ENCODE measurements at regions of chr11 and their contacts with region 1.

Region 1: GRCh38 chr11:67382276-67383136 is 9.1 kb upstream of the CLCF1 start:
- DNase-seq: peak; percentile 88
- H3K4me3 Mint-ChIP-seq: no peak overlapping the region
- H3K27ac Mint-ChIP-seq: peak overlapping the region; percentile 2
- H3K4me1 Mint-ChIP-seq: peaks cover 59% of the 10 kb centered on the region
- H3K27me3 Mint-ChIP-seq: no peaks in the 10 kb centered on the region
- CTCF ChIP-seq: peak; percentile 94

Region 2: GRCh38 chr11:67265633-67266423 is 116.7 kb before region 1 on chr11:
- CTCF ChIA-PET with region 1: interaction called, 10 read pairs
- intact Hi-C with region 1: loop called (anchors 10 kb)
- DNase-seq: peak; percentile 90
- H3K4me3 Mint-ChIP-seq: peak overlapping the region; percentile 100
- H3K27ac Mint-ChIP-seq: peak overlapping the region; percentile 66
- H3K4me1 Mint-ChIP-seq: peaks cover 46% of the 10 kb centered on the region
- H3K27me3 Mint-ChIP-seq: no peaks in the 10 kb centered on the region
- CTCF ChIP-seq: peak; percentile 71

Region 3: DNA sequence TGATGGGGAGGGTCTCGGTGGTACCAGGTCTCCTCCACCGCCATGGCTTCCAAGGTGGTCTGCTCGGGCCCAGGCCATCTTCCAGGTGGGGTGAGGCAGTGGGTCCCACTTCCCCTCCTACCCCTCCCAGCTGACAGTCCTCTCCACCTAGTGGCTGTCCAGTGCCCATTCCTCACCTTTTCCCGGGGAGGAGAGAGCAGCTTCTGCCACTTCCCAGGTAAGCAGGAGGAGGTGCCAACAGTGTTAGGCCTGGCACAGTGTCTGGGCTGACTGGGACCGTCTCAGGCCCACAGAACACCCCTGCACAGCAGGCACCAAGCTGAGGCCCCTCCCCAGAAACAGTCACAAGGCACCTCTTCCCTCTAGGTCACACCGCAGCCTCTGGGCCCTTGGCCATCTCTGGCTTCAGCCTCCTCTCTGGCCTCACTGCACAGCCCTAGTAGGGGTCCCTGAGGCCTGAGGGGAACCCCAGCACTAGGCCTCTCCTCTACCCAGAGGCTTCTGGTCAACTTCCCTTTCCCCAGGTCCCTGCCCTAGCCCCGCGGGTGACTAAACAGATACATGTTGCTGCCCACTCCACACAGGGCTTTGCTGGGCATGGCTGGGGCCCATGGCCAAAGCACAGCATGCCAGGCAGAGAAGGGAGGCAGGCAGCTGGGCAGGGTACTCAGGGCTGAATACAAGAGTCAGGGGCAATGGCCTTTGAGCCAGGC is 95.7 kb before region 1 on chr11:
- CTCF ChIA-PET with region 1: no interaction called
- intact Hi-C with region 1: no loop called
- DNase-seq: no peak
- H3K4me3 Mint-ChIP-seq: peak overlapping the region; percentile 81
- H3K27ac Mint-ChIP-seq: peak overlapping the region; percentile 92
- H3K4me1 Mint-ChIP-seq: peaks cover 15% of the 10 kb centered on the region
- H3K27me3 Mint-ChIP-seq: no peaks in the 10 kb centered on the region
- CTCF ChIP-seq: no peak

Region 4: GRCh38 chr11:67345920-67346799 is 36.3 kb before region 1 on chr11:
- CTCF ChIA-PET with region 1: interaction called, 46 read pairs
- intact Hi-C with region 1: loop called (anchors 5 kb)
- DNase-seq: peak; percentile 77
- H3K4me3 Mint-ChIP-seq: peak overlapping the region; percentile 21
- H3K27ac Mint-ChIP-seq: peak overlapping the region; percentile 96
- H3K4me1 Mint-ChIP-seq: peaks cover 55% of the 10 kb centered on the region
- H3K27me3 Mint-ChIP-seq: no peaks in the 10 kb centered on the region
- CTCF ChIP-seq: peak; percentile 84

Measured in Calu3 (cell line).